ENCODE measurements at regions of chr14 and their contacts with region 1.

Region 1: DNA sequence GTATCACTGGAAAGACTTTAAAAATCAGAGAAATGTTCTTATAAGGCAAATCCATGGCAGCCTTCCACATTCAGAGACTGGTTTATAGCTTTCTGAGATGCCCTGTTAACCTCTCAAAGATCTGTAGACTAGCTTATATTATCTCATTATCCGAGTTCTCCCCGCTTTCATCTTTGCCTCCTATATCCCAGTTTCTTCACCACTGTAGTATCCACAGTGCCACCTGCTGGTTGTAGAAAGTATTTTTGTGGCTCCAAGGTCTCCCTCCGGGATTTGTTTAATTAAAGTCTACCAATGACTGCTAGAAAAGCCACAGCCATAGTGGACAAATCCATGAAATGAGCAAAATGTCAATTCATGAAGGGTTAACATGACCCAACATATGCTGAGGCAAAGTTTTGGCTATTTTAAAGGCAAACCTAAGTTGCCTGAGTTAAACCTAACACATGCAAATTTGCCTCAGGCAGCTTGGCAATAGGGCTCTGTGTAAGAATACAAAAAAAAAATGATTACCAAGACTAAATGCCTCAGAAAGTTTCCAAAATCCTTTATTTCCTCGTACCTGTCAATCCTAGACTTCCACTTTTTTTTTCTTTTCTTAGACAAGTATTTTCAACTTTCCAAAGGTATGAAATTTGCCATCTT is 218.8 kb upstream of the BMP4 start:
- DNase-seq: peak; percentile 23 to 86
- H3K4me3 ChIP-seq: no peak overlapping the region
- H3K27ac ChIP-seq: no peak overlapping the region
- H3K4me1 ChIP-seq: no peaks in the 10 kb centered on the region
- H3K27me3 ChIP-seq: no peaks in the 10 kb centered on the region
- CTCF ChIP-seq: peak in 2 of 3 experiments; percentile 70 to 74; a peak in 3 of 4 replicates
- EP300 ChIP-seq: no peak
- POLR2A ChIP-seq: no peak
- RAD21 ChIP-seq: peak; percentile 86 to 92

Region 2: DNA sequence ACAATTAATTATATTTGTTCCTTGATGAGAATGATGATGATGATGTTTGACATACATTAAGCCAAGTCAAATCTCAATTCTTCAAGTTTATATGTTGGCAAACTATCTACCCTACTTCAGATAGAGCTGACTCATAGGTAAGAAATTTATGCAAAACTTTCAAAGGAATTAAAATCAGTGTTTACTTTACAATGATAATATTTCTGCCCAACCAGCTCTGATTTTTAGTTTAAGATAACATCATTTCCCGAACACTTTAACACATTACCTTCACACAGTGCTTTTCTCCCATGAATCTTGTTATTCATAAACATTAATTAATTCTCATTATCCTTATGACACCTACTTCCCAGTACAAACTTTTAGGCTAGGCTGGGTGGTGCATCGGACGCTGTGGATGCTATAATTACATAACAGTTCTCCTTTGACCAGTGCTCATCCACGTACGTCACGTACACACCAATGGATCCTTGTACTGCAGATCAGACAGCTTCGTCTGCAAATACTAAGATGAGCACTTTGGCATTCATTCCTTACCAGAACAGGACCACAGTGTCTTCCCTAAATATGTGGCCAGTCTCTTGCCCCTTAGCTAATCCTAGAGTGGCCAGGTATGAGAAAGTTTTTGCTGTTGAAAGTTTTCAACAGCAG is 237.1 kb before region 1 on chr14:
- CTCF ChIA-PET with region 1: interaction called, 10 read pairs
- POLR2A ChIA-PET with region 1: no interaction called
- DNase-seq: no peak
- H3K4me3 ChIP-seq: no peak overlapping the region
- H3K27ac ChIP-seq: no peak overlapping the region
- H3K4me1 ChIP-seq: peaks cover 0 to 3% (median 1%) of the 10 kb centered on the region in 4 experiments; a peak in 4 of 7 replicates
- H3K27me3 ChIP-seq: no peaks in the 10 kb centered on the region
- CTCF ChIP-seq: no peak
- EP300 ChIP-seq: no peak
- POLR2A ChIP-seq: no peak
- RAD21 ChIP-seq: no peak

Region 3: GRCh38 chr14:54001189-54001913 is 174.1 kb before region 1 on chr14:
- CTCF ChIA-PET with region 1: interaction called, 13 read pairs
- POLR2A ChIA-PET with region 1: no interaction called
- DNase-seq: no peak
- H3K4me3 ChIP-seq: no peak overlapping the region
- H3K27ac ChIP-seq: no peak overlapping the region
- H3K4me1 ChIP-seq: 0 out of 7 replicates have a peak, but pooled peaks cover 0 to 4% (median 0%) of the 10 kb centered on the region in 4 experiments
- H3K27me3 ChIP-seq: no peaks in the 10 kb centered on the region
- CTCF ChIP-seq: peak; percentile 47 to 64 (median 51)
- EP300 ChIP-seq: no peak
- POLR2A ChIP-seq: no peak
- RAD21 ChIP-seq: peak; percentile 57 to 64

Region 4: DNA sequence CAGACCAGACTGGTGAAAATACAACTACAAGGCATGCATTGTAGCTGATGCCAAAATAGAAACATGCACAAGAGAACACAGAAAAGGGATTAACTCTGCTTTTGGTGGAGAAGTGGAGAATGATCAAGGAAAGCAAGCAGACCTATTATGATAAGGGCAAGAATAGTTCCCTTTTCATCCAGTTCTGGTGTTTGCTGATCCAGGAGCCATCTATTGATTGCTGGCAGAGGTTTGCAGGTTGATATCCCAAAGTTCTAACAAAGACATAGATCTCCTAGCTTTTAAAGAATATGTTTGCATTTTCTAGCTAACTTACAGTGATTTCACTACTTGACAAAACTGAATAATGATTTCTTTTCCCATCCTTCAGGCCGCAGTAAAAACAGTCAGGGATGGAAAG is 55.2 kb after region 1 on chr14:
- CTCF ChIA-PET with region 1: no interaction called
- POLR2A ChIA-PET with region 1: no interaction called
- DNase-seq: no peak
- H3K4me3 ChIP-seq: no peak overlapping the region
- H3K27ac ChIP-seq: no peak overlapping the region
- H3K4me1 ChIP-seq: no peaks in the 10 kb centered on the region
- H3K27me3 ChIP-seq: no peaks in the 10 kb centered on the region
- CTCF ChIP-seq: no peak
- EP300 ChIP-seq: no peak
- POLR2A ChIP-seq: no peak
- RAD21 ChIP-seq: no peak

Region 5: GRCh38 chr14:54329082-54329695 is 153.8 kb after region 1 on chr14:
- CTCF ChIA-PET with region 1: interaction called, 19 read pairs
- POLR2A ChIA-PET with region 1: no interaction called
- DNase-seq: peak; percentile 62 to 64
- H3K4me3 ChIP-seq: no peak overlapping the region
- H3K27ac ChIP-seq: no peak overlapping the region
- H3K4me1 ChIP-seq: no peaks in the 10 kb centered on the region
- H3K27me3 ChIP-seq: no peaks in the 10 kb centered on the region; a peak in 1 of 7 replicates
- CTCF ChIP-seq: peak; percentile 38 to 95 (median 77)
- EP300 ChIP-seq: no peak
- POLR2A ChIP-seq: no peak
- RAD21 ChIP-seq: peak; percentile 91 to 96